Activated naive CD4-positive, alpha-beta T cell treated with anti-CD3 and anti-CD28 coated beads for 36 hours (primary cell): ENCODE measurements at regions of chr14 and their contacts with region 1.

Region 1: DNA sequence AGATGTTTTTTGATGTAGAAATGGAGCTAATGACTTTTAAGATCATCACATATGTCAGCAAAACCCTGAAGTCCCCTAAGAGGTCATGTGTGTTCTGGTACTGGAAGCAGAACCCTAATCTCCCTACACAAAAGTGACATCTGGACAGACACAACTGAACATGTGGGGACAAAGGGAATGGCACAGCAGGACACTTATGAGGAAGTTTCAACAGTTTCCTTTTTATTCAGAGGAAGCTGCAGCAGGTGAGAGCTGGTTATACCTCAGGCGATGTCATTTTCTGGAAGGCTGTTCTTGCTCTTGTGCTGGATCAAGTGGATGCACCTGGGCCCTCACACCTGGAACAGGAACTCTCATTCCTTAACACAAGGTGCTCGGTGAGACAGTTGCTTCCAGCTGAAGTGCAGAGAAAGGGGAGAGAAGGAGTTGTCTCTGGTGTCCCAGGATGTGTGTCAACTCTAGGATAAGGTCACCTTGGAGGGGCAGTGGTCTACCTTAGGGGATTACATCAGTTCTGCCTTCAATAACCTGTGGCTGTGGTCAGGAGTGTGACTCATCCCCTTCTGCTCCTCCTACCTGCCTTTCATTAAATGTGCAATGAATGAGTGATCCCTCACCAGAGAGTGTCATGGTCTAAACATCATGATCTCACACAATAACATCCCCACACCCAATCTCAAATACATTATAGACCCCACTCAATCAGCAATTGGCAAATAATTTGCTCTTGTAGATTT is 463.4 kb downstream of the TMEM121 start:
- DNase-seq: peak; percentile 74
- H3K4me3 Mint-ChIP-seq: no peak overlapping the region
- H3K27ac Mint-ChIP-seq: peak overlapping the region; percentile 21
- H3K4me1 Mint-ChIP-seq: peaks cover 47% of the 10 kb centered on the region
- H3K27me3 Mint-ChIP-seq: no peaks in the 10 kb centered on the region

Region 2: GRCh38 chr14:104238424-104239184 is 1751.1 kb before region 1 on chr14:
- CTCF ChIA-PET with region 1: no interaction called
- intact Hi-C with region 1: no loop called
- DNase-seq: no peak
- H3K4me3 Mint-ChIP-seq: no peak overlapping the region
- H3K27ac Mint-ChIP-seq: no peak overlapping the region
- H3K4me1 Mint-ChIP-seq: no peaks in the 10 kb centered on the region
- H3K27me3 Mint-ChIP-seq: peaks cover 6% of the 10 kb centered on the region

Region 3: GRCh38 chr14:105248757-105249435 is 740.8 kb before region 1 on chr14:
- CTCF ChIA-PET with region 1: no interaction called
- intact Hi-C with region 1: no loop called
- DNase-seq: peak; percentile 33
- H3K4me3 Mint-ChIP-seq: peak overlapping the region; percentile 73
- H3K27ac Mint-ChIP-seq: no peak overlapping the region
- H3K4me1 Mint-ChIP-seq: peaks cover 20% of the 10 kb centered on the region
- H3K27me3 Mint-ChIP-seq: no peaks in the 10 kb centered on the region

Region 4: DNA sequence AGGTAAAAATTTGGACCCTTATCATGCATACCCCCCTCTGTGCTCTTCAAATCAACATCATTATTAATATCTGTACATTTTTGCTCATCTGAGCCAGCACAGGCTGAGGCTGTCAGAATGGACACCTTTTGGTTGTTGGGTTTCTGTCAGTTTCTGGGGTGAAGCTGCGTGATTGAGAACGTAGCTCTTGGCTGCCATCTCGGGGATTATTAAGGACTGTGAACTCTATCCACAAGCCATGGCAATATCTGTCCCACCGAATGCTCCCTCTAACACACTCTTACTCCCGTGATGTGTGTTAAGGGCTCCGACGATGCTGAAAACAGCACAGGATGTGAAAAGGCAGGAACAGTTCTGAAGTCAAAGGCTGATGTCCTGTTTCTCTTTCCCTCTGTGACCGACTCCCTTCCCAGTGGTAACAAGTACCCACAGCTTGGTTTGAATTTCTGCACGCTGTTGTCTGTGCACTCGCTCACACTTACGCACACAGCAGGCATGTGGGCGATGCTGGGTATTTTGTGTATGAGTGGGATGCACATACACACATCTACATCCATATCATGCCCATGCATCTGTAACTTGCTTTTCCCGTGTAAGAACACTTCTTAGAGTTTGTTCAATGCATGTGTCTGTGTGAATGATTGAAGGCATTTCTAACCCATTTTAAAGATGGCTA is 57.8 kb before region 1 on chr14:
- CTCF ChIA-PET with region 1: no interaction called
- intact Hi-C with region 1: no loop called
- DNase-seq: peak; percentile 15
- H3K4me3 Mint-ChIP-seq: no peak overlapping the region
- H3K27ac Mint-ChIP-seq: no peak overlapping the region
- H3K4me1 Mint-ChIP-seq: no peaks in the 10 kb centered on the region
- H3K27me3 Mint-ChIP-seq: peaks cover 47% of the 10 kb centered on the region

Region 5: GRCh38 chr14:105974902-105975301 is 14.8 kb before region 1 on chr14:
- CTCF ChIA-PET with region 1: interaction called, 23 read pairs
- intact Hi-C with region 1: no loop called
- DNase-seq: peak; percentile 64
- H3K4me3 Mint-ChIP-seq: no peak overlapping the region
- H3K27ac Mint-ChIP-seq: no peak overlapping the region
- H3K4me1 Mint-ChIP-seq: peaks cover under 1% of the 10 kb centered on the region
- H3K27me3 Mint-ChIP-seq: no peaks in the 10 kb centered on the region